PC-9 (cell line): ENCODE measurements at regions of chr2 and their contacts with region 1.

Region 1: GRCh38 chr2:38783586-38783985 is 5.6 kb downstream of the GEMIN6 start:
- DNase-seq: no peak
- H3K4me3 ChIP-seq: no peak overlapping the region
- H3K27ac ChIP-seq: no peak overlapping the region
- H3K4me1 ChIP-seq: peaks cover 7% of the 10 kb centered on the region; the same call in 1 of the 2 replicates
- H3K27me3 ChIP-seq: no peaks in the 10 kb centered on the region
- CTCF ChIP-seq: no peak

Region 2: GRCh38 chr2:38627391-38627790 is 156.2 kb before region 1 on chr2:
- CTCF ChIA-PET with region 1: interaction called, 16 read pairs
- POLR2A ChIA-PET with region 1: no interaction called
- intact Hi-C with region 1: no loop called
- DNase-seq: no peak
- H3K4me3 ChIP-seq: no peak overlapping the region
- H3K27ac ChIP-seq: no peak overlapping the region
- H3K4me1 ChIP-seq: no peaks in the 10 kb centered on the region
- H3K27me3 ChIP-seq: no peaks in the 10 kb centered on the region
- CTCF ChIP-seq: no peak

Region 3: DNA sequence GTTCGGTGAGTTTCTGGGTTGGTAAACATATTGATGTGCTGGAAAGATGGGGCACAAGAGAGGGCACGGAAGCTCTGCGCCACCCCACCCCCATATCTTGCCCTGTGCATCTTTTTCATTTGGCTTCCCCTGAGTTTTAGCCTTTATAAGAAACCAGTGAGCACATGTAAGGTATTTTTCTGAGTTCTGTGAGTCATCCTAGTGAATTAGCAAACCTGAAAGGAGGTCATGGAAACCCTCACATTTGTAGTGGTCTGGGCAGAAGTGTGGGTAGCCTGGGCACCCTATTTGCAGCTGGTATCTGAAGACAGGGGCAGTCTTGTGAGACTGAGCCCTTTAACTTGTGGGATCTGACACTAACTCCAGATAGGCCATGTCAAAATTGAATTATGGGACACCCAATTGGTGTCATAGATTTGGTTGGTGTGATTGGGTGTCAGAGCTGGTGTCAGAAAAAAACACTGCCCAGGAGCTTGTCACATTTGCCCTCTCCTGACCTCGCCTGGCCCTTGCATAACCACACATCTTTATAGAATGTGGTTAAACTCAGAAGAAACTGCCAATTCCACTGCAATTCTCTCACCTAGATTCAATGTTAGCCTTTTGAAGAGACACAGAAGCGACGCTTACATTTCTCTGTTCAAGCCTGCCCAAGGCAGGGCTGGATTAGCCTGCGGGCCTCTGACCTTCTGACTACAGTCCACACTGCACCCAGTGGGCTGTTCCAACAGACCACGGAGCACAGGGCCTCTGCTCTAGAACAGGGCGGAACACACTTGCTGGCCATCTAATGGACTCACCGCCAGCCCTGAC is 129.7 kb before region 1 on chr2:
- CTCF ChIA-PET with region 1: no interaction called
- POLR2A ChIA-PET with region 1: no interaction called
- intact Hi-C with region 1: no loop called
- DNase-seq: no peak
- H3K4me3 ChIP-seq: no peak overlapping the region
- H3K27ac ChIP-seq: no peak overlapping the region
- H3K4me1 ChIP-seq: no peaks in the 10 kb centered on the region
- H3K27me3 ChIP-seq: no peaks in the 10 kb centered on the region
- CTCF ChIP-seq: no peak